PC-9 (cell line): ENCODE measurements at regions of chr6 and their contacts with region 1.

Region 1: GRCh38 chr6:164947164-164947563 is 362.2 kb downstream of the C6orf118 start:
- DNase-seq: no peak
- H3K4me3 ChIP-seq: no peak overlapping the region
- H3K27ac ChIP-seq: no peak overlapping the region
- H3K4me1 ChIP-seq: no peaks in the 10 kb centered on the region
- H3K27me3 ChIP-seq: no peaks in the 10 kb centered on the region
- CTCF ChIP-seq: no peak

Region 2: GRCh38 chr6:163726037-163726695 is 1221.0 kb before region 1 on chr6:
- CTCF ChIA-PET with region 1: interaction called, 13 read pairs
- POLR2A ChIA-PET with region 1: no interaction called
- intact Hi-C with region 1: no loop called
- DNase-seq: no peak
- H3K4me3 ChIP-seq: no peak overlapping the region
- H3K27ac ChIP-seq: no peak overlapping the region
- H3K4me1 ChIP-seq: no peaks in the 10 kb centered on the region
- H3K27me3 ChIP-seq: peaks cover 100% of the 10 kb centered on the region
- CTCF ChIP-seq: no peak

Region 3: DNA sequence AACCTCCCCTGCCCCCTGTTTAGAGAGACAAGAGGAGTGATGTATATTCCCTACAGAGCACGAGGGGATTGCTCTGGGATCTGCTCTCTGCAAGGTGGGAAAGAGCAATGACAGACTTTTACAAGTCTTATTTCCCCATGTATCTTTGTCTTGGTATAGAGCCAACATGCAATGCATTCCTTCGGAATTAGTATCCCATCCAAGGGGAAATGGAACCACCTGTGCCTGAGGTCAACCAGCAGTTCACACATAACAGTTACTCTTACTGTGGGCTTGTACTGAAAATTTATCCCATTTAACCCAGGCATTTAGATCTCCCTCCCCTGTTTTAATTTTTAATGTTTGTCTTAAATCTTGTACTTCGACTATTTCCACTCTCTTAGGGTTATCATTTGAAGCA is 111.9 kb after region 1 on chr6:
- CTCF ChIA-PET with region 1: no interaction called
- POLR2A ChIA-PET with region 1: no interaction called
- intact Hi-C with region 1: no loop called
- DNase-seq: no peak
- H3K4me3 ChIP-seq: no peak overlapping the region
- H3K27ac ChIP-seq: no peak overlapping the region
- H3K4me1 ChIP-seq: no peaks in the 10 kb centered on the region
- H3K27me3 ChIP-seq: peaks cover 42% of the 10 kb centered on the region
- CTCF ChIP-seq: no peak